A549 (cell line): ENCODE measurements at regions of chr9 and their contacts with region 1.

Region 1: DNA sequence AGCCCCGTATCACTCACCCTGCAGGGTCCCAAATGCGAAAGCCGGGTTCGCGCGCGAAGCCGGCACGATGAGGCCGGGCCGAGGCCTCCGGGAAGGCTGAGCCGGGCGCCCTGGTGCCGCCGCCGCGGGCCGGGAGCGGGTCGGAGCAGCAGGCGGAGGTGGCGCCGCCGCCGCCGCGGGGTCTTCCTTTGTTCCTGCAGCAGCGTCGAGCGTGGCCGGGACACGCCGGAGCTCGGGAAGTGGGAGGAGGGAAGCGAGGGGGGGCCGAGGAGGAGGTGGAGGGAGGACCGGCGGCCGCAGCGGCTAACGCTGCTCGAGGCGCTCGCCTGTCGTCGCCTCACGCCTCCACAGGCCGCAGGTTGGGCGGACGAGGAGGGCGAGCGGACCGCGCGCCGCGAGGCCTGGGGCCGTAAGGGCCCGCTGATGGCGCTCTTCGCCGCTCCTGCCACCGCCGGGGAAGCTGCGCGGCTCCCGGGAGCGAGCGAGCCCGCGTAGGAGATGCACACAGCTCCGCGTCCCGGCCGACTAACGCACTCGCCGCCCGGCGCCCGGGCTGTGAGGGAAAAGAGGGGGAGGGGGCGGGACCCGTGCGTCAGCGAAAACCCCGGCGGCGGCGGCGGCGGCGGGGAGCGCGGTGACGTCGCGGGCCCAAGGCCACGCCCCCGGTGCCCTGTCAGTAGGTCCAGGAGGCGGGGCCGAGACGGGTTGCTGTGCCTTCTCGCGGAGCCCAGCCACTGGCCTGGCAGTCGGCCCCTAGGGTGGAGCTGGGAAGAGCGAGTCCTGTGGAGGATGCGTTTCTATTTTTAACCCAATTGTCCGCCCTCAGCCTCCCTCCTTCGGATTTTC is at the start of gene ZFAND5:
- DNase-seq: peak; percentile 94 to 98
- ATAC-seq: peak; percentile 82 to 89
- H3K4me3 ChIP-seq: peak within 1 kb of the TSS; percentile 91
- H3K27ac ChIP-seq: peak within 1 kb of the TSS; percentile 99
- H3K4me1 ChIP-seq: peaks cover 26% of the 10 kb centered on the region
- CTCF ChIP-seq: peak; percentile 21; the same call in 1 of the 3 replicates
- EP300 ChIP-seq: peak in 1 of 2 experiments; percentile 38; a peak in 2 of 5 replicates
- POLR2A ChIP-seq: peak; percentile 95
- RAD21 ChIP-seq: peak; percentile 26 to 68; a peak in 4 of 5 replicates
- polyA plus RNA-seq, gene ZFAND5: 234 and 315 TPM in 2 replicates

Region 2: DNA sequence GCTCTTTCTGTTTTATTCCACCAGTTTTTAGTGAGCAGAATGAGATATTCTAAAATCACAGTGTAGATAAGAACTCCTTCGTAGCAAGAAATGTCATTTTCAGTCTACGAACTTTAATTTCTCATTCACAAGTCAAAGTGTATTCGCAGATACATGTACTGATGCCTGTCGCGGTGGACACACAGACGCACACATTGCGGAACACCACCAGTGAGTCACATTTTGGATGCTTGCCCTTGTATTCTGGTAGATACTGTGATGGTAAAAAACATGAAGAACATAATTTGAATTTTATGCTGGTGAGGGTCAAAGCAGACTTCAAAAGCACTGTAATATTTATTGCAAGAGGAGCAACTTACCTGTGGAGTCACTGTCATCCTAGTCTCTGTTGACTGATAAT is 299.8 kb before region 1 on chr9:
- CTCF ChIA-PET with region 1: no interaction called
- POLR2A ChIA-PET with region 1: no interaction called
- DNase-seq: no peak
- ATAC-seq: peak in 1 of 2 experiments; percentile 43; a peak in 3 of 6 replicates
- H3K4me3 ChIP-seq: no peak overlapping the region
- H3K27ac ChIP-seq: no peak overlapping the region
- H3K4me1 ChIP-seq: no peaks in the 10 kb centered on the region
- CTCF ChIP-seq: no peak
- EP300 ChIP-seq: no peak
- POLR2A ChIP-seq: no peak
- RAD21 ChIP-seq: no peak

Region 3: GRCh38 chr9:72228282-72228681 is 136.6 kb before region 1 on chr9:
- CTCF ChIA-PET with region 1: no interaction called
- POLR2A ChIA-PET with region 1: no interaction called
- DNase-seq: no peak
- ATAC-seq: no peak
- H3K4me3 ChIP-seq: no peak overlapping the region
- H3K27ac ChIP-seq: no peak overlapping the region
- H3K4me1 ChIP-seq: no peaks in the 10 kb centered on the region
- CTCF ChIP-seq: no peak
- EP300 ChIP-seq: no peak
- POLR2A ChIP-seq: no peak
- RAD21 ChIP-seq: no peak

Region 4: DNA sequence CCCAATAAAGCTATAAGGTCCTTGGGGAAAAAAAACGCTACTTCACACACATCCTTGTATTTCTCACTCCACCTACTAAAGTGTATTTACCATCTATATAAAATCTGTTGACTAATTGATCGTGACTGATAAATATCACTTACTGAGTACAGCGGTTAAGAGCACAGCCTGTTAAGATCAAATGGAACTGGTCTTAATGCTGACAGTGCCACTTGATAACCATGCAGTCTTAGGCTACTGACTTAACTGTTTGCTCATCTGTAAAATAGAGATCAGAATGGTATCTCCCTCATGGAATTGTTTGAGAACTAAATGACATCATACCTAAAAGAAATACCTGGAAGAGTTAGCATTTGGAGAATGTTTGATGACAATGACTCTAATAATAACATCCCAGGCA is 67.4 kb before region 1 on chr9:
- CTCF ChIA-PET with region 1: interaction called, 8 read pairs
- POLR2A ChIA-PET with region 1: interaction called, 119 read pairs
- DNase-seq: no peak
- ATAC-seq: no peak
- H3K4me3 ChIP-seq: no peak overlapping the region
- H3K27ac ChIP-seq: peak overlapping the region; percentile 95 to 97
- H3K4me1 ChIP-seq: peaks cover 43% of the 10 kb centered on the region
- CTCF ChIP-seq: no peak
- EP300 ChIP-seq: no peak
- POLR2A ChIP-seq: no peak
- RAD21 ChIP-seq: no peak

Region 5: DNA sequence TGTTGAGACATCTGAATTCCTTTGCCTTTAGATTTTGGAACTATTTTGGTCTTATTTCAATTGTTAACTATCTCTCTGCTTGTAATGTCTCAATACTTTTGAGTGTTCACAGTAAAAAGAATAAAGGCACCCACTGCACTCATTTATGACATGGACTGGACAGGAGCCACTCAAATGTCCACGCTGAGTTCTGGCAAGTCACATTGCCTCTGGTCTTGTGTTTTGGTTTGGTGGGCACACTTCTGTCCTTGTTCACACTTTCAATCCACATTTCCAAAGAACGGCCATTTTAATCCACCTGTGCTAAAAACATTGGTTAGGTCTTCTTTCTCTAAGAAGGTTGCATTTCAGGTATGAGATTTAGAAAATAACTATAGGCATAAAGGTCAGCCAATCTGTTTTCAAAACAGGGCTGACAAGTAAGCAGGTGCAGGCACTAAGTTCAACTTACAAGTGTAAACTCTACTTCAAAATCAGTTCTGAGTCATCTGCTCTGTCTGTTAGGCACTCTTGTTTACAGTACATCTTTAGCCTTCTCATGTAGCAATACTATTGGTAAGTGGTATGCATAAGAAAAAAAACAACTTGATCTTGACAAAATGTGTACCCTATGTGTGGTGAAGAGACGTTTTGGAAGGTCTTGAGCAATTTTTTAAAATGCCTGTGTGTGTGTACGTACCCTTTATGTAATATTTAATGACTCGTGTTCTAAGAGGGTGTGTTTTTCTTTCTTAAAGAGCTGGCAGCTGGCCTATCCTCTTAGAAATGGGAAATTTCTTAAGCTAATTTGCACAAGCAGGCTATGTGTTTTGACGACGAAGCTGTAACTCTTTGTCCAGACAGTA is 31.6 kb after region 1 on chr9:
- CTCF ChIA-PET with region 1: interaction called, 4 read pairs
- POLR2A ChIA-PET with region 1: interaction called, 24 read pairs
- DNase-seq: peak; percentile 28 to 73
- ATAC-seq: peak; percentile 92 to 94
- H3K4me3 ChIP-seq: no peak overlapping the region
- H3K27ac ChIP-seq: peak overlapping the region; percentile 50 to 54; a peak in 5 of 6 replicates
- H3K4me1 ChIP-seq: peaks cover 38% of the 10 kb centered on the region
- CTCF ChIP-seq: no peak
- EP300 ChIP-seq: peak in 1 of 2 experiments; percentile 30; a peak in 1 of 5 replicates
- POLR2A ChIP-seq: no peak
- RAD21 ChIP-seq: no peak; a peak in 1 of 5 replicates

Region 6: GRCh38 chr9:72473474-72474261 is 108.8 kb after region 1 on chr9:
- CTCF ChIA-PET with region 1: interaction called, 4 read pairs
- POLR2A ChIA-PET with region 1: interaction called, 56 read pairs
- DNase-seq: peak in 1 of 2 experiments; percentile 36
- ATAC-seq: no peak
- H3K4me3 ChIP-seq: no peak overlapping the region
- H3K27ac ChIP-seq: peak overlapping the region; percentile 27 to 69; a peak in 5 of 6 replicates
- H3K4me1 ChIP-seq: peaks cover 52% of the 10 kb centered on the region
- CTCF ChIP-seq: no peak
- EP300 ChIP-seq: no peak
- POLR2A ChIP-seq: no peak
- RAD21 ChIP-seq: no peak

Region 7: GRCh38 chr9:72554221-72554641 is 189.3 kb after region 1 on chr9:
- CTCF ChIA-PET with region 1: interaction called, 5 read pairs
- POLR2A ChIA-PET with region 1: interaction called, 41 read pairs
- DNase-seq: peak; percentile 18 to 94
- ATAC-seq: peak; percentile 56 to 78
- H3K4me3 ChIP-seq: no peak overlapping the region
- H3K27ac ChIP-seq: peak overlapping the region; percentile 83 to 88
- H3K4me1 ChIP-seq: peaks cover 70% of the 10 kb centered on the region
- CTCF ChIP-seq: no peak
- EP300 ChIP-seq: peak; percentile 10 to 72; a peak in 3 of 5 replicates
- POLR2A ChIP-seq: no peak
- RAD21 ChIP-seq: peak in 1 of 2 experiments; percentile 48; a peak in 4 of 5 replicates

Region 8: DNA sequence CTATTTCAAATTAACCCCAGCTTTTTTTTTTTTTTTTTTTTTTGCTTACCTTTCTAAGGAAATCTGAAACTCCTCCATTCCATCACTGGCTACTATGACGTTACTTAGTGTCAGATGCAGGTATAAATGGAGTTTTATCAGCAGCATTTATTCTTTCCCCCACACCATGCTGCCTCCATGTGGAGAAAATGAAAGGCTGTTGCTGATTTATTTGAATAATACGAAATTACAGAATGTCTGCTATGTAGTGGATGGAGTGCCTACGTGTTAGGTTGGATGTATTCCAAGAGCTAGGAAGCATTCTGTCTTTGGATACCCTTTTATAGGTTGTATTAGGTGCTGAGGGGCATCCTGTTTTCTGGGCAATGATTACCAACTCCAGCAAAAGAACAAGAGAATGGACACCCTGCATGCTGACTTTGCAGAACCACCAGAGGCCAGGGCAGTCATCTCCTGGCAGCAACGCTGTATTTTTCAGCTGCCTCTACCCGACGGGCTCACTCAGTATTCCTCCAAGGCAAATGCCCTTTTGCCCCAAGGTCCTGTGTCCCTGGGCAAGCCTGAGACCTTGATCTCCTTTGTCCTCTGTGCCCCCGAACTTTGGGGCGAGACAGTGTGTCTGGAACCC is 388.5 kb after region 1 on chr9:
- CTCF ChIA-PET with region 1: interaction called, 3 read pairs
- POLR2A ChIA-PET with region 1: interaction called, 10 read pairs
- DNase-seq: peak; percentile 13 to 56
- ATAC-seq: peak; percentile 47 to 79; a peak in 5 of 6 replicates
- H3K4me3 ChIP-seq: no peak overlapping the region
- H3K27ac ChIP-seq: peak overlapping the region; percentile 12 to 20; a peak in 3 of 6 replicates
- H3K4me1 ChIP-seq: 0 out of 3 replicates have a peak, but pooled peaks cover 2% of the 10 kb centered on the region
- CTCF ChIP-seq: peak; percentile 65
- EP300 ChIP-seq: no peak
- POLR2A ChIP-seq: no peak
- RAD21 ChIP-seq: peak; percentile 74 to 78